ENCODE measurements at regions of chr16 and their contacts with region 1.

Region 1: GRCh38 chr16:10181196-10182162 is 749 bp downstream of the GRIN2A start:
- DNase-seq: peak; percentile 65 to 67 (median 67)
- ATAC-seq: peak; percentile 90 to 96 (median 94)
- H3K4me3 ChIP-seq: no peak overlapping the region
- H3K27ac ChIP-seq: no peak overlapping the region
- H3K4me1 ChIP-seq: peaks cover 0 to 15% (median 4%) of the 10 kb centered on the region in 4 donors
- H3K27me3 ChIP-seq: peaks cover 0 to 19% of the 10 kb centered on the region in 2 donors
- CTCF ChIP-seq: peak; percentile 82 to 96 (median 88)
- POLR2A ChIP-seq: no peak

Region 2: GRCh38 chr16:9159839-9160550 is 1021.5 kb before region 1 on chr16:
- intact Hi-C with region 1: loop called in 1 of 2 experiments (anchors 10 kb)
- DNase-seq: peak; percentile 64 to 75 (median 67)
- ATAC-seq: peak; percentile 88 to 97 (median 92)
- H3K4me3 ChIP-seq: no peak overlapping the region
- H3K27ac ChIP-seq: no peak overlapping the region
- H3K4me1 ChIP-seq: no peaks in the 10 kb centered on the region
- H3K27me3 ChIP-seq: no peaks in the 10 kb centered on the region
- CTCF ChIP-seq: peak; percentile 64 to 84 (median 66)
- POLR2A ChIP-seq: no peak

Region 3: DNA sequence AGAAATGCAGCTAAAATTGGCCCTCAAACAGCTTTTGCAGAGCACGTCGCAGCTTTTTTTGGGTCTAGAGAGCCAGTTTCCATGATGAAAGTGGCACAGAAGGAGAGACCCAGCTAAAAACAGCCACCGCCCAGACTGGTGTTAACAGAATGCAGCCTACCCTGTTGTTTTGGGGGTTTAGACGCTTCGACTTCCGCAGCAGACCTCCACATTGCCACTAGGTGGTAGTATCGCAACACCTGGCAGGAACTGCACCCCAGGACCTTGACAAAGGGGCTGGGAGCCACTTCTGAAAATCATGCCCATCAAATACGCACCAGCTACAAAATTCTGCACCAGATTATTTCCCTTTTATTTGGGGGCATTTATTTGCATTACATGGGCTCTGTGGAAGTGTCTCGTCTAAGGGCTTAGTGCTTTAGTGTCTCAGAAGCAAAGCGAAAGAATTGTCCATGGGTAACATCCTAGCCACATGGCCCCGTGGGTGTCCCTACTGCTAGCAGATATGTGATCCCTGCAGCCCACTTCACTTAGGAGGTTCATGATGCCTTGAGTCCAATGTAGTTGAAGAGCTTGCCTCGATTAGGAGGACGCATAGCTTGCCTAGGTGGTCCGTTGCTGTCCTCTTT is 922.9 kb before region 1 on chr16:
- intact Hi-C with region 1: loop called in 1 of 2 experiments (anchors 10 kb)
- DNase-seq: peak in 1 of 3 donors; percentile 47
- ATAC-seq: peak in 3 of 4 donors; percentile 20 to 60 (median 53)
- H3K4me3 ChIP-seq: no peak overlapping the region
- H3K27ac ChIP-seq: no peak overlapping the region
- H3K4me1 ChIP-seq: peaks cover 0 to 23% (median 11%) of the 10 kb centered on the region in 4 donors
- H3K27me3 ChIP-seq: no peaks in the 10 kb centered on the region
- CTCF ChIP-seq: peak; percentile 55 to 80 (median 66)
- POLR2A ChIP-seq: no peak

Region 4: DNA sequence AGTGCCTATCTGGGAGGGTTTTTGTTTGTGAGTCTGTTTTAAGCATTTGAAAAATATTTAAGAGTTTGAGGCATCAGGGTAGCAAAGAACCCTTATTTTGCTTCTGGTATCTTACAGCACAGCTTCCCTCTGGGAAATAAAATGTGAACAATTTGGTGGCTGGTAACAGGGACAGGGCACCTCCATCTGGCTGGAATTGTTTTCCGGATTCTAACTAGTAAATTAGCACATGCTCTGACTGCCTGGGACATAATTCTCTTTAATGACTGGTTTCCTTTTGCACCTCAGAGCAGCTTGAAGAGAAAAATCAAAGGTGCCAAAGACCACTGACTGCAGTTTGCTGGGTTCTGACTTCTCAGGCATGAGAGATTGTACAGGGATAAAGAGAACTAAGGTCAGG is 468.3 kb before region 1 on chr16:
- intact Hi-C with region 1: loop called in 1 of 2 experiments (anchors 5 kb)
- DNase-seq: no peak
- ATAC-seq: no peak
- H3K4me3 ChIP-seq: no peak overlapping the region
- H3K27ac ChIP-seq: no peak overlapping the region
- H3K4me1 ChIP-seq: no peaks in the 10 kb centered on the region
- H3K27me3 ChIP-seq: no peaks in the 10 kb centered on the region
- CTCF ChIP-seq: no peak
- POLR2A ChIP-seq: no peak

Measured in right lobe of liver (tissue), 6 donors.